ENCODE measurements at regions of chr7 and their contacts with region 1.

Region 1: GRCh38 chr7:12490117-12490688 is 80.3 kb upstream of the SCIN start:
- DNase-seq: no peak
- H3K4me3 Mint-ChIP-seq: no peak overlapping the region
- H3K27ac Mint-ChIP-seq: no peak overlapping the region
- H3K4me1 Mint-ChIP-seq: no peaks in the 10 kb centered on the region
- H3K27me3 Mint-ChIP-seq: peaks cover 15% of the 10 kb centered on the region

Region 2: GRCh38 chr7:11831736-11832495 is 658.3 kb before region 1 on chr7 and contains the start of gene THSD7A:
- intact Hi-C with region 1: loop called (anchors 5 kb)
- DNase-seq: no peak
- H3K4me3 Mint-ChIP-seq: peak within 1 kb of the TSS; percentile 48
- H3K27ac Mint-ChIP-seq: no peak within 1 kb of the TSS
- H3K4me1 Mint-ChIP-seq: peaks cover 12% of the 10 kb centered on the region
- H3K27me3 Mint-ChIP-seq: peaks cover 42% of the 10 kb centered on the region
- total RNA-seq, gene THSD7A: not detected in 2 replicates

Region 3: DNA sequence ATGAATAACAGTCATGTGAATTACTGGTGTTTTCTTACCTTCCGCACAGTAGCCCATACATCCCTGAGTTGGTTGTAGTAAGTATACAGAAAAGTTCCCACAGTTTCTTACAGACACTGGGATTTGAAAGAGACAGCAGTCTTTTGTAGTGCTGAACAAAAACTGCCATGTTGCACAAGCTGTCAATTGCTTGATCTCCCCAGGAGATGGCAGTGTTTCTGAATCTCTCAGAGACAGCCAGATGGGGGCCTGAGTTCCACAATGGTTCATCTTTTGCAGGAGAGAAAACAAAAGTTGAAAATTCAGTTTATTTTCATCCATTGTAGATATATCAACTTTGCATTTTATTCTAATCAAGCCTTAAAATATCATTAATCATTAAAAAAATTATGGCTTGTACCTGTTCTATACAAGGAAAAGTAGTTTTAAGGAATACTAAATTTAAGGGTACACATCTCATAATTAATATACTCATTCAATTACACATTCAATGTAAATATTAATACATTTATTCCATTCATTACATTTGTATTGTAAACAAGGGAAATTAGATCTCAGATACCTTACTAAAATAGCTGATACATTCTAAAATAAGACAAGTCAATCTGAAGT is 101.0 kb before region 1 on chr7:
- intact Hi-C with region 1: loop called (anchors 2 kb)
- DNase-seq: peak; percentile 84
- H3K4me3 Mint-ChIP-seq: no peak overlapping the region
- H3K27ac Mint-ChIP-seq: no peak overlapping the region
- H3K4me1 Mint-ChIP-seq: no peaks in the 10 kb centered on the region
- H3K27me3 Mint-ChIP-seq: no peaks in the 10 kb centered on the region

Region 4: GRCh38 chr7:12458520-12459131 is 31.6 kb before region 1 on chr7:
- intact Hi-C with region 1: loop called (anchors 1 kb)
- DNase-seq: peak; percentile 73
- H3K4me3 Mint-ChIP-seq: no peak overlapping the region
- H3K27ac Mint-ChIP-seq: no peak overlapping the region
- H3K4me1 Mint-ChIP-seq: no peaks in the 10 kb centered on the region
- H3K27me3 Mint-ChIP-seq: peaks cover 3% of the 10 kb centered on the region